ENCODE measurements at regions of chr7 and their contacts with region 1.

Region 1: DNA sequence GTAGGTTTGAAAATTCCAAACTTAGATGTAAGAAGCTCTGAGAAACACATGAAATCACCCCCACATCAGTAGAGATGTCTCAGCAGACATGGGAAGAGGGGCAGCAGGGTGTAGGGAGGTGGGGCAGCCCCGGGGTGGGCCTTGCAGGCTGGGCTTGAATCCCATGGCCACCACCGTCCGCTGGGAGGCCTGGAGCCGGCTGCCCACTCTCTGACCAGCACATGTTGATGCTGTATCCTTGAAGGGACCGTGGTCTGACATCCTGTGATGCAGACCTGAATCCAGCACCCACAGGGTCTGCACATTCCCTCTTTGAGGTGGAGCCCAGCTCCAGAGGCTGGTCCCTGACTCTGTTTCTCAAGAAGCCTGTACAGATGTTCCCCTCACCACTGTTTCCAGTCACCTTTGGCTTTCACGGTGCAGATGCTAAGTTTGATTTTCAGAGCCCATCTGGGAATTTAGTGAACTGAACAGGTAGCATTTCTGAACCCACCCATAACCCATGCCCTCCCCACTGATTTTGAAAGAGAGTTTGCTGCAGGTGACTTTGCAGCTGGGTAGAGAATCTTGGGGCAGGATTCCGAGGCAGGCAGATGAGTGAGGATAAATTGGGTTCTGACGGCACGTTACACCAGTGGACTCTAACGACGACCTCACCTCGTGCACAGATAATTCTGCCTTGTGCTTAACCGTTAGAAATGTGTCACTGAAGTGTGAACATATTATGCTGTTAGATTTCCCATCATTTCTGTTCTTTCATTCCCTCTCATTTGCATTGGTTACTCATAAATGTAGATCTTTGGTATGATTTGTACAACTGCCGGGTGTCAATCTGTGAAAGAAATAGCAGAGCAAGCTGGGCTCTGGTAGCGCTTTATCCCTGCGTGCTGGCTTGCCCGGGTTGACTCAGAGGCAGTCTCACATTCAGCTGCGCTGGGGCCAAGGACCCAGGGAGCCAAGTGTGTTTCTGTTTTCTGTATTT is 45.7 kb downstream of the IKZF1 start:
- DNase-seq: peak; percentile 77
- H3K4me3 Mint-ChIP-seq: peak overlapping the region; percentile 53
- H3K27ac Mint-ChIP-seq: peak overlapping the region; percentile 93
- H3K4me1 Mint-ChIP-seq: peaks cover 97% of the 10 kb centered on the region
- H3K27me3 Mint-ChIP-seq: no peaks in the 10 kb centered on the region

Region 2: DNA sequence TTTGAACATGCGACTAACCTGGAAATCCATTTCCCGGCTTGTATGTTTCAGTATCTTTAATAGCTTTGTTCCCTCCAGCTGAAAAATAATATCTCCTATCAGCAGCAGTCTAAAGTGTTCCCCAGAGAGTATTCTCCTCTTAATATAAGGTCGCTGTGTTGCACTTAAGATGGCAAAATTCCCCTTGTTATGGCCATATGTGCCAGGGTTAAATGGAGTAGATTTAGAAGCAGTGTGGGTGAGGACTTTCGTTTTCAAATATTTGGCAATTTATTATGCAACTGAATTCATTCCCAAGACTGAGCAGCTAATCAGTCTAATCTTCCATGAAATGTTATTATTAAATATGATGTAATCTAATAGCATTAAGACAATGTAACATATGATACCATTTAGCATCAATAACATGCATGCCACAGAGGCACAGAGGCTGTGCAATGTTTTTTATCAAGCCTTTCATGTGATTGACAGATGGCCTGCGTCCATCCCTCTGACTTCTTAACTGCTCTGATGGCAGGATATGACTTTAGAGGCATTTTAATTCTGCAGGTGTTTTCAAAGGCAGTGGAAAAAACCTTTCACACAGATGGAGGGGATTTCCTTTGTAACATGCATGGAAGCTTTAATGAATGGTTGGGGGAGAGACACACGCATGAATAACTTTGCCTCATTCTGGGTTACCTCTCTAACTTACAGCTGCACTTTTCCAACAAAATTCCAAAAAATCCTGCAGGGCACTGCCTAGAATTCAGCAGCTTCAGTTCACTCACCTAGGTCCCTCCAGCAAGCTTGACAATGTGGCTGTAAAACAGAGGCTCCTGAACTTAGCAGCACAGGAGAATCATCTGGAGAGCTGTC is 202.1 kb before region 1 on chr7:
- intact Hi-C with region 1: loop called (anchors 2 kb)
- DNase-seq: peak; percentile 17
- H3K4me3 Mint-ChIP-seq: no peak overlapping the region
- H3K27ac Mint-ChIP-seq: peak overlapping the region; percentile 83
- H3K4me1 Mint-ChIP-seq: peaks cover 70% of the 10 kb centered on the region
- H3K27me3 Mint-ChIP-seq: no peaks in the 10 kb centered on the region

Region 3: DNA sequence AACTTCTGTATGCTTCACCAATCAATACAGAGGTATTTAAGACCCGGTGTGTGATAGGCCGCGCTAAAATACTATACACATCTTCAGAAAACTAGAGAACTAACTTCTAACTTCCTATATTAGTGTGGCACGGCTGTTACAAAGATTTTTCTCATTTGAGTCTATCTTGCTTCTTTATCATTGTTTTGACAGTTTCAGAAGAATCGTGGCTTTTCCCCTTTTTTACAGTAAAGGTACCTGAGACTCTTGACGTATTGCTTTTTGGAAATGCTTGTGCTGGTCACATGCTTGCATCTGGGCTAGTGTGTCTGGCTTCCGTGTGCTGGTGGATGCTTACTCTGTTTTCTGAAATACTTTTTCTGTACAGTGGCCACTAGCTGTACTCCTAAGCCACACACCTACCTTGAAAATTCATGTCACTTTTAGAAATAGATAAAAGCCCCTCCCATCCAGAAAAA is 33.0 kb before region 1 on chr7:
- intact Hi-C with region 1: loop called (anchors 1 kb)
- DNase-seq: peak; percentile 53
- H3K4me3 Mint-ChIP-seq: peak overlapping the region; percentile 82
- H3K27ac Mint-ChIP-seq: peak overlapping the region; percentile 93
- H3K4me1 Mint-ChIP-seq: peaks cover 100% of the 10 kb centered on the region
- H3K27me3 Mint-ChIP-seq: no peaks in the 10 kb centered on the region

Region 4: GRCh38 chr7:50335795-50336754 is 14.2 kb before region 1 on chr7:
- intact Hi-C with region 1: loop called (anchors 1 kb)
- DNase-seq: peak; percentile 71
- H3K4me3 Mint-ChIP-seq: no peak overlapping the region
- H3K27ac Mint-ChIP-seq: no peak overlapping the region
- H3K4me1 Mint-ChIP-seq: peaks cover 33% of the 10 kb centered on the region
- H3K27me3 Mint-ChIP-seq: no peaks in the 10 kb centered on the region

Region 5: DNA sequence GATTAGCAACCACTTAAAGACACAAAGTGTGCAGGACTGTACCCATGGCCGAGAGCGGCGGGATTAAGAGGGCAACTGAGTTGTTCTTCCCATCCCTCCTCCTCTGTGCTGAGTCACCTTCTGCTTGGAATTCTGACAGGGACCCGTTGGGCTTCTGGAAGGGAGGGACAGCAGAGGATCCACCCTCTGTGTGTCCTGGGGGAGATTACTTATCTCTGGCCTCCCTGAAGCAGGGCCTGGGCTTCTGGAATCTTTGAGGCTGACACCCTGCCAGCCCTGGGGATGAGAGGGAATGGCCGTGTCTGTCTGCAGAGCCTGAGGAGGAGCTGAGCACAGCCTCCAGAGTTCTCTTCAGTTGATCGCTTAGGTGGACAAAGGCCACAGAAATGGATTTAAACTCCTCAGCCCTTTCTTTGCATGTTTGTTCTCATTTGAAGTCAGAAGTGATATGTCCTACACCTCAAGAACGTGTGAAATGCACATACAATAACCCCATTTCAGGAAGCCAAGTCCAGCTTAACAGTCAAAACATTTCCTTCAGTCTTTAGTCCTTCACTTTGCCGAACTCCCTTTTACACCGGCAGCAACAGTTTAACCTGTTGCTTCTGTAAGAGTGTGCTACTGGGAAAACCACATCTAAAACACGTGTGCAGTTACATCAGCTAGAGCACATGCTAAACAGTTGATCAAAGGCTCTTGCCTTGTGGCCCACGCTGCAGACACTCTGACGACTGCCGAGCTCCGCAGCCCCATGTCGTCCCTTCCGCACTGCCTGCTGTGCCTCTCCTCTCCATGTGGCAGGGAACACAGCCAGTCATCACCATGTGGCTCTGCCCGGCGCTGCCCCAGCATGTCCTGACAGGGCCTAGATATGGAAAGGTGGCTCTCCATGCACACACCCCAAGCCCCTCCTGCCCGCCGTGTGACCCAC is 10.0 kb after region 1 on chr7:
- intact Hi-C with region 1: loop called (anchors 1 kb)
- DNase-seq: peak; percentile 76
- H3K4me3 Mint-ChIP-seq: peak overlapping the region; percentile 75
- H3K27ac Mint-ChIP-seq: peak overlapping the region; percentile 97
- H3K4me1 Mint-ChIP-seq: peaks cover 96% of the 10 kb centered on the region
- H3K27me3 Mint-ChIP-seq: no peaks in the 10 kb centered on the region

Region 6: DNA sequence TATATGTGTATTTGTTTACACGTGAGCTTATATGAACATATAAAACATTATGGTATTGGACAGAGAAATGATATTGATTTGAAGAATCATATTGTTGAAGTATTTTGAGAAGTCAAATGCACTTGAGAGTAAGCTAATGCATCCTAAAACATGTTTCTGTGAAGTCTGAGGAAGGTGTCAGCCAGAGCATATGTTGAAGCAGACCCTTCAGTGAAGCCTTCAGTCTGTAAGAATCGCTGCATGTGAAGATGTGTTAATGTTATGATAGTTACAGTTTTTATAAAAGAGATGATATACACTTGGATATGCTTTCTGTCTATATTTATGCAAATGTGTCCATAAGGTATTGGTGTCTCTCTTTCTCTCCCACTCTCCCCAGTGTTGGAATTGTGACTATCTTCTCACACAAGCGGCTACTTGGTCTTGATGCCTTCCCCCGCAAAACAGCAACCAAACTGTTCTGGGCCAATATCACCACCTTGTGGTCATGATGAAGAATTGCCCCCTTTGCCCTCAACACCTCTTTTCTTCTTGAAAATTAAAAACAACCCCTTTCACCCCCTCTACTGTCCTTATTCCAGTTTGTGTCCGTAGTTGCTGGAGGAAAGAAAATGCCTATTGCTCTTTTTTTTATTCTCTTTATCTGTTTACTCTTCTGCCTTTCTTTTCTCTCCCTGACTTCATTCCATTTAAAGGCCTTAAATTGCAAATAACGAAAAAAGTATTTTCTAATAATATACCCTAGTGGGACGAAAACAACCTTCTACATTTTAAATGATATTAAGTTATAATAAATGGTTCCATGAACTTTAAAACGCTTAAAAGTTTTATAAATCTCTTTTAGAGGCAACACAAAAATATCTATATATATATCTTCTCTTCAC is 19.1 kb after region 1 on chr7:
- intact Hi-C with region 1: loop called (anchors 1 kb)
- DNase-seq: no peak
- H3K4me3 Mint-ChIP-seq: peak overlapping the region; percentile 45
- H3K27ac Mint-ChIP-seq: peak overlapping the region; percentile 85
- H3K4me1 Mint-ChIP-seq: peaks cover 100% of the 10 kb centered on the region
- H3K27me3 Mint-ChIP-seq: no peaks in the 10 kb centered on the region

Measured in activated T-helper 1 cell treated with anti-CD3 and anti-CD28 coated beads, Interleukin-12 subunit alpha, Interleukin-12 subunit beta, Interleukin-2, Interleukin-4 antibody, amounts not matched to agents 30 ng/mL and 10 ng/mL and 1 ng/mL, durations not matched to agents 14 hours and 24 hours and 36 hours (primary cell).